Sigmoid colon (tissue), 7 donors: ENCODE measurements at regions of chr1 and their contacts with region 1.

Region 1: GRCh38 chr1:8032366-8032910 is 6.3 kb upstream of the ERRFI1 start:
- DNase-seq: no peak
- H3K4me3 ChIP-seq: no peak overlapping the region
- H3K27ac ChIP-seq: peak overlapping the region in 2 of 4 donors; percentile 41 to 96
- H3K4me1 ChIP-seq: peaks cover 3 to 33% (median 14%) of the 10 kb centered on the region in 4 donors
- H3K27me3 ChIP-seq: no peaks in the 10 kb centered on the region
- CTCF ChIP-seq: no peak
- EP300 ChIP-seq: no peak
- POLR2A ChIP-seq: no peak

Region 2: GRCh38 chr1:8238851-8239305 is 206.4 kb after region 1 on chr1:
- intact Hi-C with region 1: loop called (anchors 2 kb)
- DNase-seq: peak; percentile 82
- H3K4me3 ChIP-seq: no peak overlapping the region
- H3K27ac ChIP-seq: peak overlapping the region; percentile 58 to 80 (median 61)
- H3K4me1 ChIP-seq: peaks cover 0 to 21% (median 10%) of the 10 kb centered on the region in 4 donors
- H3K27me3 ChIP-seq: no peaks in the 10 kb centered on the region
- CTCF ChIP-seq: no peak
- EP300 ChIP-seq: no peak
- POLR2A ChIP-seq: no peak